ENCODE measurements at regions of chrX and their contacts with region 1.

Region 1: GRCh38 chrX:132022967-132023895 is at the start of gene STK26:
- DNase-seq: peak; percentile 84
- ATAC-seq: peak; percentile 76
- H3K4me3 ChIP-seq: peak within 1 kb of the TSS; percentile 96
- H3K27ac ChIP-seq: peak within 1 kb of the TSS; percentile 76
- H3K4me1 ChIP-seq: peaks cover 25% of the 10 kb centered on the region
- H3K27me3 ChIP-seq: no peaks in the 10 kb centered on the region
- CTCF ChIP-seq: no peak
- total RNA-seq, gene STK26: 47.4 and 50.7 TPM in 2 replicates

Region 2: GRCh38 chrX:131854581-131854980 is 168.7 kb before region 1 on chrX:
- CTCF ChIA-PET with region 1: no interaction called
- POLR2A ChIA-PET with region 1: no interaction called
- intact Hi-C with region 1: loop called (anchors 5 kb)
- DNase-seq: peak; percentile 34
- ATAC-seq: no peak
- H3K4me3 ChIP-seq: no peak overlapping the region
- H3K27ac ChIP-seq: no peak overlapping the region
- H3K4me1 ChIP-seq: no peaks in the 10 kb centered on the region
- H3K27me3 ChIP-seq: no peaks in the 10 kb centered on the region
- CTCF ChIP-seq: peak; percentile 60

Region 3: DNA sequence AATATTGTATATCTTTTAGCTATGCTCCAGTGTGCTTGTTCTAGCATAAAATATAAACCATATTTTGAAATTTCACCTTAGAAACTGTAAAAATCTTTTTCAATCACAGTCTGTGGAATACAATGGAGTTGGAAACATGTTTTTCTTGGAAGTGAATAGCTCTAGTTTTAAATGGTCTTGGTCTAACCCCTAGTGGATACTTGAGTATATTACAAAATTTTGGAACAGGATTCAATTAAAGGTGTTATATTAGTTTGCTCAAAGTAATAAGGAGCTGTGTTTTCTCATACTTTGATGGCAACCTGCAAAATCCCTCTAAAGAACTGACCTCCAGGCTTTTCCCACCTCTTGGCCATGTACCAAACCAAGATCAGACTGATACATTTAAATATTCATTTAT is 48.0 kb after region 1 on chrX:
- CTCF ChIA-PET with region 1: interaction called, 5 read pairs
- POLR2A ChIA-PET with region 1: no interaction called
- intact Hi-C with region 1: loop called (anchors 1 kb)
- DNase-seq: peak; percentile 37
- ATAC-seq: peak; percentile 45; the same call in 1 of the 2 replicates
- H3K4me3 ChIP-seq: no peak overlapping the region
- H3K27ac ChIP-seq: no peak overlapping the region
- H3K4me1 ChIP-seq: peaks cover 16% of the 10 kb centered on the region
- H3K27me3 ChIP-seq: no peaks in the 10 kb centered on the region
- CTCF ChIP-seq: peak; percentile 58

Region 4: GRCh38 chrX:132219343-132219768 is 196.1 kb after region 1 on chrX and contains the start of gene RAP2C:
- CTCF ChIA-PET with region 1: interaction called, 3 read pairs
- POLR2A ChIA-PET with region 1: no interaction called
- intact Hi-C with region 1: loop called (anchors 2 kb)
- DNase-seq: peak; percentile 78
- ATAC-seq: peak; percentile 56
- H3K4me3 ChIP-seq: peak within 1 kb of the TSS; percentile 92
- H3K27ac ChIP-seq: peak within 1 kb of the TSS; percentile 72
- H3K4me1 ChIP-seq: 0 out of 2 replicates have a peak, but pooled peaks cover 19% of the 10 kb centered on the region
- H3K27me3 ChIP-seq: no peaks in the 10 kb centered on the region
- CTCF ChIP-seq: peak; percentile 72
- total RNA-seq, gene RAP2C: 13.0 and 13.8 TPM in 2 replicates

Region 5: DNA sequence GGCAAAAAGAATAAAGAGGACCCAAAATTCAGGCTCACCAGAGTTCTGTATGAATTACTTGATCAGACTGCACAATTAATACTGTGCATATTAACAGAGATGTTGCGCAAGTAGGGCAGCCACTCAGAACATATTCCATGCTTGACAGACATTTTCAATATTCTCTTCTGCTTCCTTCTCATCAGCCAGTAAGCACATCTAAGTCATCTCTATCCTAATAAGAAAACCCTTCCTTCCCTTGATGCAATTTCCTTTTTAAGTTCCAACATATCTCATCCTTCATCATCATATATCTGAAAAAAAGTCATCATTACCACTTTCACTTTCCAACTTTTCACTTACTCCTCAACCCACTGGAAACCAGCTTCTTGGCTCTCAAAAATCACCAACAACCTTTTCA is 451.3 kb after region 1 on chrX:
- CTCF ChIA-PET with region 1: no interaction called
- POLR2A ChIA-PET with region 1: no interaction called
- intact Hi-C with region 1: loop called (anchors 10 kb)
- DNase-seq: no peak
- ATAC-seq: no peak
- H3K4me3 ChIP-seq: no peak overlapping the region
- H3K27ac ChIP-seq: no peak overlapping the region
- H3K4me1 ChIP-seq: peaks cover 14% of the 10 kb centered on the region
- H3K27me3 ChIP-seq: no peaks in the 10 kb centered on the region
- CTCF ChIP-seq: no peak

Region 6: DNA sequence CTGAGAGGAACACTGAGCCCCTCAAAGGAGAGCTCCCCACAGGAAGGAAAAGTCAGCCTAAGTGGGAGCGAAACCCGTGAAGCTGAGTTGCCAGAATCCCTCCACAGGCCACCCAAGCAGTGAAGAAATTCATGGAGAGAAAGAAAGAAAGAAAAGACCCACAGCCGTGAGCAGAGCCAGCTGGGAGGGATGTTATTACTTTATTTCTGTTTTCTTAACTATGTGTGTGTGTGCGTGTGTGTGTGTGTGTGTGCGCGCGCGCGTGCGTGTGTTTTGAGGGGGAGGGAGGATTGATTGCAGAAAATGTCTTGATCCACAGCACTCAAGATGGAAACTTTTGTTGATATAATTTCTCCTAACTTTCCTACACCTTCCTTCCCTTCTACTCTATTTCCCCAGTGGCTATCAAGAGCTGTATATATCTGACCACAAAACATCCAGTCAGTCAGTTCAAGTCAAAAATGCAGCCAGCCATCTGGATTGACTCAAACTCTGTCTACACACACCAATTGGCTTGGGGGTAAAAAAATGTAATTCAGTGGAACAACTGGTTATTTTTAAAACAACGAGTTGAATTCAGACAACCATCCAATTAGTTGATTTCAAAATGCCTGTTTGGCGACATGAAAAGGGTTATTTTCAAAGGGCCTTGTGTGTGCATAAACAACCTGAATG is 1975.9 kb after region 1 on chrX:
- CTCF ChIA-PET with region 1: no interaction called
- POLR2A ChIA-PET with region 1: interaction called, 10 read pairs
- intact Hi-C with region 1: no loop called
- DNase-seq: no peak
- ATAC-seq: no peak
- H3K4me3 ChIP-seq: no peak overlapping the region
- H3K27ac ChIP-seq: no peak overlapping the region
- H3K4me1 ChIP-seq: no peaks in the 10 kb centered on the region
- H3K27me3 ChIP-seq: peaks cover 18% of the 10 kb centered on the region; the same call in 1 of the 2 replicates
- CTCF ChIP-seq: no peak

Measured in PC-3 (cell line).